BJ (cell line): ENCODE measurements at regions of chr5 and their contacts with region 1.

Region 1: DNA sequence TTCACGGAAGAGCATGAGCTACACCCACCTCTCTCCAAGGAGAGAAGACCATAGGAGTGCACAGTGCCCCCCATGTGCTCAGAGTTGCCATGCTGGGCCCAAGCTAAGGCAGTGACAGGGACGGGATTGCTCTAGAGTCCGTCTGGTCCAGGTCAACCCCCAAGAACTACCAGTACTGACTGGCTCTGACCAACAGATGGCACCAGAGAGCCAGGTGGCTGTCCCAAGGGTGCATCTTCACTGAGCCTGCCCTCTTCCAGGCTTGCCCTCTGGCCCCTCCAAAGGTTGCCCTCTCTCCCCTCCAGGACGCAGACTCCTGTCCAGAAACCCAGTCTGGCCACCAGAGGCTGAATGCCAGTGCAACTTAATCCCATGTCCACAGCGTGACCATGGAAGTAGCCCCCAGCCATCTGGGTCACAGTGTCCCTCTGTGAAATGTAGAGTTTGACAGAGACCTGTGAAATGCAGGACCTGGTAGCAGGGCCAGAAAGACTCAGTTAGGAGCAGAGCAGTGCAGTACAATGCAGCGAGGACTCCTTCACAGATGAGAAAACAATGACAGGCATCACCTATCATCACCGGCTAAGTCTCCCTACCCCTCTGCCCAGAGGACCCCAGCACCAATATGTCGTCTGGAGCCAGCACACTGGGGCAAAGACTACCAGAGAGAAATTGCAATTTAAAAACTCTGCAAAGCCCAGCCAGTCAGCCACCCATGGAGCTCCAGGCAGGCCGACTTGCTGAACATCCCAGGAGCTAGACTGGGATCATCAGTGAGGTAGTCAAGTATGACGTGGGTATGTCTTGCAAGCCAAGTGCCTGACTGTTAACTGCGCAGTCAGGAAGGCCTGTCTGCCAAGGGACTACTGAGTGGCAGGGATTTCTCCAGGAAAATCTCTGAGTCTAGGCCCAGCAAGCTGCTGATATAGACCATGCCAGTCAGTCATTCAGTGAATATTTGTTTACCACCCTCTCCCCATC is 7.7 kb upstream of the SKP1 start:
- DNase-seq: no peak
- H3K4me3 ChIP-seq: no peak overlapping the region
- H3K27me3 ChIP-seq: no peaks in the 10 kb centered on the region
- CTCF ChIP-seq: peak; percentile 96

Region 2: DNA sequence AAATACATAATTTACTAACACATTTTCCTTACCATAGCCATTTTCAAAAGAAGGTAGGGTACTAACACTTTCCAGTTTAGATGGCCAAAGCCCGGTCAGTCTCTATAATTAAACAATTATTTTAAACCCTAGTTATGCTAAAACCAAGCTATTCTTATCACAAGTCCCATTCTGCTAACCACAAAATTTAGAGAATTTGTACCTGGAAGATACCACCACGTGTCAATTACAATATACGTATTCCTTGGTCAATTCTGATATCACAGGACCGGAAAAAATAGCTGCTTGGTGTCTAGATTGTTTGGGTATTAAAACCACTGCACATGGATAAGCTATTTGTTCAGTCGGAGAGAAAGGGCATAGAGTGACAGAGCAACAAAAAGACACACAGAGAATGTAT is 11.2 kb after region 1 on chr5:
- CTCF ChIA-PET with region 1: interaction called, 24 read pairs
- POLR2A ChIA-PET with region 1: no interaction called
- DNase-seq: no peak
- H3K4me3 ChIP-seq: no peak overlapping the region
- H3K27me3 ChIP-seq: no peaks in the 10 kb centered on the region
- CTCF ChIP-seq: no peak

Region 3: GRCh38 chr5:134281081-134281480 is 96.6 kb after region 1 on chr5:
- CTCF ChIA-PET with region 1: interaction called, 277 read pairs
- POLR2A ChIA-PET with region 1: no interaction called
- DNase-seq: no peak
- H3K4me3 ChIP-seq: no peak overlapping the region
- H3K27me3 ChIP-seq: peaks cover 2% of the 10 kb centered on the region; the same call in 1 of the 2 replicates
- CTCF ChIP-seq: no peak

Region 4: GRCh38 chr5:134289509-134290113 is 105.2 kb after region 1 on chr5:
- CTCF ChIA-PET with region 1: interaction called, 277 read pairs
- POLR2A ChIA-PET with region 1: no interaction called
- DNase-seq: peak; percentile 19
- H3K4me3 ChIP-seq: no peak overlapping the region
- H3K27me3 ChIP-seq: no peaks in the 10 kb centered on the region; the same call in 1 of the 2 replicates
- CTCF ChIP-seq: peak; percentile 69

Region 5: GRCh38 chr5:134328619-134329018 is 144.2 kb after region 1 on chr5:
- CTCF ChIA-PET with region 1: no interaction called
- POLR2A ChIA-PET with region 1: no interaction called
- DNase-seq: no peak
- H3K4me3 ChIP-seq: no peak overlapping the region
- H3K27me3 ChIP-seq: no peaks in the 10 kb centered on the region
- CTCF ChIP-seq: no peak